ENCODE measurements at regions of chr22 and their contacts with region 1.

Region 1: GRCh38 chr22:44380756-44381470 is 68.2 kb upstream of the SHISAL1 start:
- DNase-seq: no peak
- H3K4me3 ChIP-seq: no peak overlapping the region
- H3K27ac ChIP-seq: no peak overlapping the region
- H3K4me1 ChIP-seq: peaks cover 0 to 4% (median 2%) of the 10 kb centered on the region in 4 experiments; a peak in 3 of 7 replicates
- H3K27me3 ChIP-seq: no peaks in the 10 kb centered on the region
- CTCF ChIP-seq: no peak
- EP300 ChIP-seq: no peak
- POLR2A ChIP-seq: no peak
- RAD21 ChIP-seq: no peak

Region 2: DNA sequence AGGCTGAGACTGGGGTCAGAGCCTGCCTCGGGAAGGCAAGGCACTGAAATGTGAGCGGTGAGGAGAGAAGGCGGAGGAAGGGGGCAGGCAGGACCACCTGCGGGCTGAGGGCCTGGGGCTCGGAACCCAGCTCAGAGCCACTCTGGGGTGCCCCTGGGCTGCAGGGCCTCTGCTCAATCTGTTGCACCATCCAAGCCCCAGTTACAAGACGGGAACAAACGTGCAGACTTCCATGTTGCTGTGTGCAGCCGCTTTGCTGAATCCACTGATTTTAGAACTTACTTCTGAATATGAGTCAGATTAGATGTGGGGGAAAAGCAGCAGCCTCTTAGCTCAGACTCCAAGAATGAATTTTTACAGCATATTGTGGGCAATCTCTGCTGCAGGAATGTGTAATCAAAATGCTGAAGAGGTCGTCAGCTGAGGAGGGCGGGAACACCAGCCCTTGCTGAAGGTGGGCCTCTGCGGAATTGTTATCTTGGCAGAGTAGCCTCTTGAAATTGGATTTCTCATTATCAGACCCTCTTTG is 178.6 kb before region 1 on chr22:
- CTCF ChIA-PET with region 1: no interaction called
- POLR2A ChIA-PET with region 1: no interaction called
- DNase-seq: no peak
- H3K4me3 ChIP-seq: no peak overlapping the region
- H3K27ac ChIP-seq: no peak overlapping the region
- H3K4me1 ChIP-seq: no peaks in the 10 kb centered on the region; a peak in 1 of 7 replicates
- H3K27me3 ChIP-seq: no peaks in the 10 kb centered on the region
- CTCF ChIP-seq: no peak
- EP300 ChIP-seq: no peak
- POLR2A ChIP-seq: no peak
- RAD21 ChIP-seq: no peak

Region 3: DNA sequence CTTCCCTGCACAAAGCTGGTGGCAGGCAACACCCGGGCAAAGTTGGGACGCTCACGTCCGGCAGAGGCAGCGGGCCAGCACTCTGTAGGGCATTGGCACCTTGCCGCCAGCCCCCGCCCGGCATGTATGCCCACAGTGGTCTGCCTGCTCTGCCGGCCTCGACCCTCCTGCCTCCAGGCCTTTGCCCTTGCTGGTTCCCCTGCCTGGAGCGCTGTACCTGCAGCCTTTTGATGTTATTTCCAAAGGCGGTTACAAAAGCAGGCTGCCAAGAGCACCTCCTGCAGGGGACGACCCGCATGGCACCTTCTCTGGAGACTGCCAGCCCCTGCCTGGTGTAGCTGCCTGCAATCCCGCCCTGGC is 11.6 kb before region 1 on chr22:
- CTCF ChIA-PET with region 1: interaction called, 59 read pairs
- POLR2A ChIA-PET with region 1: no interaction called
- DNase-seq: peak; percentile 31 to 92
- H3K4me3 ChIP-seq: no peak overlapping the region
- H3K27ac ChIP-seq: no peak overlapping the region
- H3K4me1 ChIP-seq: no peaks in the 10 kb centered on the region; a peak in 3 of 7 replicates
- H3K27me3 ChIP-seq: 0 out of 7 replicates have a peak, but pooled peaks cover 0 to under 1% (median 0%) of the 10 kb centered on the region in 4 experiments
- CTCF ChIP-seq: peak; percentile 74 to 87 (median 86)
- EP300 ChIP-seq: no peak
- POLR2A ChIP-seq: no peak
- RAD21 ChIP-seq: peak; percentile 72 to 81

Region 4: DNA sequence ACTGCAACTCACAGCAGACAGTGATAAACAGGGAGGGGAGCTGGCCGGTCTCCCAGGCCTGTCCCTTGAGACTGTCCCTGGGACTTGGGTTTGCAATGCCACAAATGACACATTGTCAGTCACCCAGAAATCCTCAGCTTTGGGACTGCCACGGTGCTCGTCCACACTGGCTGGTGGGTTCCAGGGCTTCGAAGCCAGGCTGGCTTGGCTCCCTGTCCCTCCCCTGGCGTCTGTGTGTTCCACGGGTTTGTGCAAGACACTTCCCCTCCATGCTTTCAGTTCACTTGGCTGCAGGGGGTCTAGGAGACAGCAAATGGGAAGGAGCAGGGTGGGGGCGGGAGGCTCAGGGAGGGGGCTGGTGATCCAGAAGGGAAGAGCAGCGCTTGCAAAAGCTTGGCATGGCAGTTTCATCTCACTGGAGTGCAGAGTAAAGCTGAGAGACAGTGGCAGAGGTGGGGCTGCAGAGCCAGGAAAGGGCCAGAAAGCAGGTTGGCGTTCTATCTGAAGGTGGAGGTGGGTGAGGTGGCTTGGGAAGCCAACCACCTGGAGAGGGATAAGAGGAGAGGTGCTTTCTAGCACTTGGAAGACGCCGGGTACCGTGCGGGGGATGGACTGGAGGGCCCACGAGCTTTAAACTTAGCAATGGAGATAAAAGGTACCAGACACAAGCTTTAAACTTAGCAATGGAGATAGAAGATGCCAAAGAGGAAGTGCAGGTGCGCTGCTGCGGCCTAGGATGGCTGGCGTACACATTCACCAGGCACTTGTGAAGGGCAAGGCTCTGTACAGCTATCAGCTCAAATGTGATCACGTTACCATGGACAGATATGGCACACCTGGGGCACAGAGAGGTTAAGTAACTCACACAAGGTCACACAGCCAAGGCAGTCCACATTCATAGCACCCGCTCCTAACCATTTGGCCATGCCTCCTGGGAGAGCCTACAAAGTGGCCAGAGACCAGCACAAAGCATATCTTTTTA is 18.2 kb after region 1 on chr22:
- CTCF ChIA-PET with region 1: interaction called, 10 read pairs
- POLR2A ChIA-PET with region 1: no interaction called
- DNase-seq: peak in 1 of 2 experiments; percentile 41
- H3K4me3 ChIP-seq: no peak overlapping the region
- H3K27ac ChIP-seq: no peak overlapping the region
- H3K4me1 ChIP-seq: no peaks in the 10 kb centered on the region; a peak in 1 of 7 replicates
- H3K27me3 ChIP-seq: peaks cover 0 to under 1% (median 0%) of the 10 kb centered on the region in 4 experiments; a peak in 2 of 7 replicates
- CTCF ChIP-seq: no peak
- EP300 ChIP-seq: no peak
- POLR2A ChIP-seq: no peak
- RAD21 ChIP-seq: no peak